ENCODE measurements at regions of chr7 and their contacts with region 1.

Region 1: GRCh38 chr7:150824379-150825177 is 24.0 kb downstream of the TMEM176A start:
- DNase-seq: no peak
- ATAC-seq: no peak

Region 2: DNA sequence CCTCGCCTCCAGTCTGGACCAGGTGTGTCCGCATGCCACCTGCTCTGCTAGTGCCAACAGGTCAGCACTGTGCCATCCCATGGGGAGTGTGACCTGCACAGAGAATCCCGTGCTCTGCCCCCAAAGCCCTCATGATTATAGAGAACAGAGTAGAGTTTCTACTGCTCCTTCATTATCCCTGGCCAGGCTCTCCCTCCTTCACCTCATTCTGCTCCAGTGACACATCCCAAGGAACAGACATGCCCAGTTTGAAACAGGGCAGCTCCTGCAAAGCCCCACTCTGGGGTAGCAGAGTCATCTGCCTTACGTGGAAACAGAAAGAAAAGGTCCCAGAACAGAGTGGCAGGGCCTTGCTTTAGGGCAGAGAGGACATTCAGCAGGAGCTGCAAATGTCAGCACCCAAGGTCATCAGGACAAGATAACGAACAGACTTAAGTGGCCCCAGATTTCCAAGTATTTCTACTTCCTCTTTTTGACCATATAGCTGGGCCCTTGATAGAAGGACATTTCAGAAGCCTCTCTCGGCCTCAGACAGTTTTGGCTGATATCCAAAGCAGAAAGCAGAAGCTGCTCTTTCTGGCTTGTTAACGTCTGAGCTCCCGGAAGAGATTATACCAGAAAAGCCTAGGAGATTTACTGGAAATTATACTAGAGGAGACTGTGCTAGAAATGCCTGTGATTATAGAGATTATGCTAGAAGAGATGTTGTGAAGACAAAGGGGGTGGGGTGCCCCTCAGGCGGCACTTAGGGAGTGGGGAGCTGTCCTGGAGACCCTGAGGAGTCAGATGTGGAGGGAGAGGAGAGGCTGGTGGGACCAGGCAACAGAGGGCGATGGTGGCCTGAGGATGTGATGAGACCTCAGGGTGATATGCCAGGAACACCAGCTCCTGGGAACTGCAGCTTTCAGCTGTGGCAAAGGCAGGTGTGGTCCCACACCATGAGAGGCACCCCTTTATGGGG is 37.0 kb before region 1 on chr7:
- intact Hi-C with region 1: loop called (anchors 2 kb)
- DNase-seq: peak; percentile 71
- ATAC-seq: peak; percentile 57

Region 3: GRCh38 chr7:150974468-150975391 is 150.2 kb after region 1 on chr7:
- intact Hi-C with region 1: loop called (anchors 10 kb)
- DNase-seq: peak; percentile 77
- ATAC-seq: no peak

Region 4: DNA sequence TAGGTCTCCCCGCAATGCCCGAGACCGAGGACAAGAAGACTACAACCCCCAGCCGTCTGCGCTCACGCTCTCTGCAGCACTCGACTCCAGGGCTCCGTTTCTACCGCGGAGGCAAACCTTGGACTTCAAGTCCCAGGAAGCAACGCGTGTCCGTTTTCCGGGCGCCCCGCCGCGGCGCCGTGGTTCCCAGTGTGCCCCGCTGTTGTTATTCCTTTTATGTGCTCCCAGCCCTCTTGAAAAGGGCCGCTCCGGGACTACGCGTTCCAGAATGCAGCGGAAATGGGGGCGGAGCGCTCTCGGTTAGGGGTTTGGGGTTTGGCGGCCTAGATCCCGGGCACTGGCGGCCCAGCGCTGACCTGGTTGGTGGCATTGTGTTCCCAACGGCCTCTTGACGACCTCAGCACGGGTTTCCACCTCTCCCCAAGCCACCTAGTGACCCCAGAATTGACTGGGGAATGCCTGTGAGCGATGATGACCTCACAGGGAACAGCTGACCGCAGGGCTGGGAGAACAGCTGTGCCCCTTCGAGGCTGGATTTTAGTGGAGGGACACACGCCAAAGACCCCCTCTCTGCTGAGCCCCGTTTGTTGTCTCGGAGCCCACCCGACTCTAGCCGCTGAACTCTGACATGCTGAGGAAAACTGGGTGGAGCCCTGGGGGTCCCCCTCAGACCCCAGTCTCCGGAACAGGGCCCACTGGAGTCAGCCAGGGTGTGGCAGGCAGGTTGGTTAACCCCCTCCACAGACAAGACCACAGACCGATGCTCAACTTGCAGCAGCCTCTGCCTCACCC is 233.6 kb after region 1 on chr7:
- intact Hi-C with region 1: no loop called
- DNase-seq: peak; percentile 99
- ATAC-seq: peak; percentile 93